ENCODE measurements at regions of chr2 and their contacts with region 1.

Region 1: GRCh38 chr2:20326163-20326780 is 24.4 kb downstream of the PUM2 start:
- DNase-seq: peak; percentile 58
- ATAC-seq: peak; percentile 95
- H3K4me3 ChIP-seq: no peak overlapping the region
- H3K27ac ChIP-seq: no peak overlapping the region
- H3K4me1 ChIP-seq: peaks cover 24% of the 10 kb centered on the region
- H3K27me3 ChIP-seq: no peaks in the 10 kb centered on the region
- CTCF ChIP-seq: peak; percentile 88
- EP300 ChIP-seq: no peak
- POLR2A ChIP-seq: no peak
- RAD21 ChIP-seq: peak; percentile 15; the same call in 1 of the 2 replicates

Region 2: DNA sequence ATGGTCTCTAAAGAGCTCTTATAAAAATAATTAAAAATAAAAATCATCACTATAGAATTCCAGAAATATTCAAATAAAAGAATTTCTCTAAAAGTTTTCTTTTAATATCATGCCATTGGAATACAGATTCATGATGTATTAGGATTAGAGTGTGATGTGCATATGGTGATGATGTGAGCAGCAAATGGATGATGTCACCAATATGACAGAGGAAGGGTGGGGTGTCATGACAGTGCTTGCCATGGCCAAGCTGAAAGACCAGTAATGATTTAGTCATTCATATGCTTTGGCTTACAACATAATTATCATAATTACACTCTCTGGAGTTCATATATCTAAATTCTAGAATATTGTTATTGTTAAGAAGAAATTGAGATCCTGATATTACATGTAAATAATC is 397.0 kb before region 1 on chr2:
- CTCF ChIA-PET with region 1: no interaction called
- POLR2A ChIA-PET with region 1: no interaction called
- in situ Hi-C with region 1: no loop called
- intact Hi-C with region 1: no loop called
- DNase-seq: no peak
- ATAC-seq: no peak
- H3K4me3 ChIP-seq: no peak overlapping the region
- H3K27ac ChIP-seq: no peak overlapping the region
- H3K4me1 ChIP-seq: peaks cover 15% of the 10 kb centered on the region
- H3K27me3 ChIP-seq: no peaks in the 10 kb centered on the region
- CTCF ChIP-seq: no peak
- EP300 ChIP-seq: no peak
- POLR2A ChIP-seq: no peak
- RAD21 ChIP-seq: no peak

Region 3: DNA sequence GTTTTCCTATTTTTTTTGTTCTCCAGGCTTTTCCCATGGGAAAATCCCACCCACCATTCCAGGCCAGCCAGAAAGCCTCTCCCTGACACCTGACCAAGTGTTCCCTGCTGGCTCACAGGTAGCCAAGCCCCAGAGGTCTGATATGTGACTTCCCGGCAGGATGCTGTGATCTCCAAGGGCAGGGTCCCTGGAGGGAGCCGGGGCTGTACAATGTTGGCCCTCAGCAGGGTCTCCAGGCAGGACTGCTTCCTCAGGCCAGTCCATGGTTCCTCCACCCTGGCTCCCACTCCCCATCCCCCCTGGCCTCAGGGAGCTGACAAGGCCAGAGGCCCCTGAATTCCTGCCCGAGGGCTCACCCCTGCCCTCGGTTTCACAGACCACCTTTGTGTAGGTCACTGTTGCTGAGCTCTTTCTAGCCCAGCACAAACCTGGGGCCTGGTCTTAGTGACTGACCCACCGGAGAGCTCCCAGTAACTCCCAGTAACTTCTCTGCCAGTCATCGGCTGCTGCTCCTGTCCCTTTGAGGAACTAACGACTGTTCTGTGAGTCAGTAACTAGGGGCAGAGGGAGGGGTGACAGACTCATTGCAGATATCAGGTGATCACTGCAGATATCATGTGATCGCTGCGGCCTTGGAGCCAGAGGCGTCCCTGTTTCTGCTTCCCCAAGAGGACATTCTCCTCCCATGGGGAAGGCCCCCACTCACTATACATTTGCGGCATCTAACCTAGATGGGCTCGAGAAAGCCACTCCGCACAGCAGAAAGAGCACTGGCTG is 140.0 kb before region 1 on chr2:
- CTCF ChIA-PET with region 1: no interaction called
- POLR2A ChIA-PET with region 1: no interaction called
- in situ Hi-C with region 1: no loop called
- intact Hi-C with region 1: no loop called
- DNase-seq: peak; percentile 94
- ATAC-seq: peak; percentile 59
- H3K4me3 ChIP-seq: peak overlapping the region; percentile 38 to 67 (median 41); a peak in 5 of 6 replicates
- H3K27ac ChIP-seq: peak overlapping the region; percentile 52
- H3K4me1 ChIP-seq: peaks cover 95% of the 10 kb centered on the region
- H3K27me3 ChIP-seq: no peaks in the 10 kb centered on the region
- CTCF ChIP-seq: no peak
- EP300 ChIP-seq: peak; percentile 39 to 46; a peak in 2 of 4 replicates
- POLR2A ChIP-seq: peak in 1 of 2 experiments; percentile 79; a peak in 2 of 4 replicates
- RAD21 ChIP-seq: no peak

Region 4: DNA sequence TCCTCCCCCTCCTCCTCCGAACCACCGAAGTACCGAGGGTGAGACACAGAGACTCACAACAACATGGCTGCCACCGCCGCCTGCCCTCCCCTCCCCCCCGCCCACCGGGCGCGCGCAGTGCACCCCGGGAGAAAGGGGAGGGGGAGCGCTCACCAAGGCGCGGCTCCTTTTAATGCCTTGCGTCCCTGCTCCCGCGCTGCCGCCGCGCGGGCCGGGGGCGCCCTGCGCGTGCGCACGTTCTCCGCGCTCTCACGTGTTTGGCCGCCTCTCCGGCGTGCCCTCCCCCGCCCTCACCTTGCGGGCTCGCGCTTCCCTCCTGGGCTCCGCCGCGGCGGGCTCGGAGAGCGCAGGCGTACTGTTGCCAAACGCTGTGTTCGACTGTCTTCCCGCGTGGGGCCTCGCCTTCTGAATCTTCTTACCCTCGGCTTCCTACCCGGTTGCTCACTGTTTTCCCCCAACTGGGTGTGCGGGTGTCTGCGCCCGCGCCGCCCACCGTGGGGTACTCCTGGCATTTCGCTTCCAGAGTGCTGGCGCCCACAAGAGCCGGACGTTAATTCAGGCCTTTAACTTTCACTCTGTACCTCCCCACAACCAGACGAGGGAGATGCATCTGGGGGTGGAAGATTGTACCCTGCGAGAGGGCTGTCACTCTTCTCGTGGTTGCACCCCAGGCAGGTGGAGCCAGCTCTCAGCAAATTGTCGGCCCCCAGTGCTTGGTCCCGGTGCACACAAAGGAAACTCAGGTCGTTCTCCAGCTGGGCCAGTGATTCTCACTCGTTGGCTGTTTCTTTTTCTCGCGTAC is 24.7 kb after region 1 on chr2 and contains the start of gene PUM2:
- CTCF ChIA-PET with region 1: no interaction called
- POLR2A ChIA-PET with region 1: interaction called, 5 read pairs
- in situ Hi-C with region 1: no loop called
- intact Hi-C with region 1: loop called (anchors 1 kb)
- DNase-seq: peak; percentile 96
- ATAC-seq: peak; percentile 87
- H3K4me3 ChIP-seq: peak within 1 kb of the TSS; percentile 96 to 98 (median 96)
- H3K27ac ChIP-seq: peak within 1 kb of the TSS; percentile 98
- H3K4me1 ChIP-seq: peaks cover 61% of the 10 kb centered on the region
- H3K27me3 ChIP-seq: no peaks in the 10 kb centered on the region; a peak in 1 of 5 replicates
- CTCF ChIP-seq: 0 out of 2 replicates have a peak, but pooled peaks have one; percentile 15
- EP300 ChIP-seq: peak in 1 of 2 experiments; percentile 54; a peak in 2 of 4 replicates
- POLR2A ChIP-seq: peak; percentile 62 to 94; a peak in 3 of 4 replicates
- RAD21 ChIP-seq: no peak; the same call in 1 of the 2 replicates
- total RNA-seq, gene PUM2: 69.6 and 94.7 TPM in 2 replicates

Measured in HepG2 (cell line).